CD4-positive, alpha-beta memory T cell (primary cell): ENCODE measurements at regions of chr16 and their contacts with region 1.

Region 1: DNA sequence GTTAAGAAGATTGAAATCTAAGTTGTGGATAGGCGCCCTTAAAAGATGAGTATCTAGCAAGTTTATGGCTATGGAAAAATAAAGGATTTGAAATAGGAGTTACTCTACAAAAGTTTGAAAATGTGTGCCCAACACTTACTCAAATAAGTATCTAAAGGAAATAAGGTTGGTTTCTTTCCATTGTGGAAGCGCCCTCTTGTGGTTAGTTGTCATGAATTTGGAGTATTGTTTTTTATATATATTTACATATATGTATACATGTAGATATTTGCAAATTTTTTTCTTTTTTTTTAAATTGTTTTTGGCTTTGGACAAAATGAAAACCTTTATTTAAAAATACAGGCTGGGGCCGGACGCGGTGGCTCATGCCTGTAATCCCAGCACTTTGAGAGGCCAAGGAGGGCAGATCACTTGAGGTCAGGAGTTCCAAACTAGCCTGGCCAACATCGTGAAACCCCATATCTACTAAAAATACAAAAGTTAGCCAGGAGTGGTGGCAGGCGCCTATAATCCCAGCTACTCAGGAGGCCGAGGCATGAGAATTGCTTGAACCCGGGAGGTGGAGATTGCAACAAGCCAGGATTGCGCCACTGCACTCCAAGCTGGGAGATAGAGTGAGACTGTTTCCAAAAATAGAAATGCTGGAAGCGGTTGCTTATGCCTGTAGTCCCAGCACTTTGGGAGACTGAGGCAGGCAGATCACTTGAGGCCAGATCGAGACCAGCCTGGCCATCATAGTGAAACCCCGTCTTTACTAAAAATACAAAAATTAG is 24.0 kb upstream of the VPS4A start:
- DNase-seq: peak; percentile 58 to 66 (median 61)
- H3K4me3 ChIP-seq: no peak overlapping the region
- H3K4me3 Mint-ChIP-seq: no peak overlapping the region
- H3K27ac ChIP-seq: no peak overlapping the region
- H3K27ac Mint-ChIP-seq: peak overlapping the region in 2 of 7 donors; percentile 65 to 72
- H3K4me1 ChIP-seq: no peaks in the 10 kb centered on the region
- H3K4me1 Mint-ChIP-seq: peaks cover 0 to 5% (median 3%) of the 10 kb centered on the region in 4 donors
- H3K27me3 ChIP-seq: no peaks in the 10 kb centered on the region
- H3K27me3 Mint-ChIP-seq: no peaks in the 10 kb centered on the region

Region 2: GRCh38 chr16:68564367-68564985 is 722.7 kb before region 1 on chr16:
- CTCF ChIA-PET with region 1: no interaction called
- POLR2A ChIA-PET with region 1: no interaction called
- intact Hi-C with region 1: no loop called
- DNase-seq: no peak
- H3K4me3 ChIP-seq: no peak overlapping the region
- H3K4me3 Mint-ChIP-seq: peak overlapping the region in 1 of 8 donors; percentile 43
- H3K27ac ChIP-seq: no peak overlapping the region
- H3K27ac Mint-ChIP-seq: no peak overlapping the region
- H3K4me1 ChIP-seq: no peaks in the 10 kb centered on the region
- H3K4me1 Mint-ChIP-seq: no peaks in the 10 kb centered on the region
- H3K27me3 ChIP-seq: no peaks in the 10 kb centered on the region
- H3K27me3 Mint-ChIP-seq: no peaks in the 10 kb centered on the region

Region 3: GRCh38 chr16:69141014-69141413 is 146.1 kb before region 1 on chr16:
- CTCF ChIA-PET with region 1: interaction called, 297 read pairs
- POLR2A ChIA-PET with region 1: no interaction called
- intact Hi-C with region 1: no loop called
- DNase-seq: no peak
- H3K4me3 ChIP-seq: no peak overlapping the region
- H3K4me3 Mint-ChIP-seq: no peak overlapping the region
- H3K27ac ChIP-seq: no peak overlapping the region
- H3K27ac Mint-ChIP-seq: peak overlapping the region in 1 of 7 donors; percentile 1
- H3K4me1 ChIP-seq: no peaks in the 10 kb centered on the region
- H3K4me1 Mint-ChIP-seq: peaks cover 5 to 13% (median 6%) of the 10 kb centered on the region in 4 donors
- H3K27me3 ChIP-seq: no peaks in the 10 kb centered on the region
- H3K27me3 Mint-ChIP-seq: no peaks in the 10 kb centered on the region

Region 4: DNA sequence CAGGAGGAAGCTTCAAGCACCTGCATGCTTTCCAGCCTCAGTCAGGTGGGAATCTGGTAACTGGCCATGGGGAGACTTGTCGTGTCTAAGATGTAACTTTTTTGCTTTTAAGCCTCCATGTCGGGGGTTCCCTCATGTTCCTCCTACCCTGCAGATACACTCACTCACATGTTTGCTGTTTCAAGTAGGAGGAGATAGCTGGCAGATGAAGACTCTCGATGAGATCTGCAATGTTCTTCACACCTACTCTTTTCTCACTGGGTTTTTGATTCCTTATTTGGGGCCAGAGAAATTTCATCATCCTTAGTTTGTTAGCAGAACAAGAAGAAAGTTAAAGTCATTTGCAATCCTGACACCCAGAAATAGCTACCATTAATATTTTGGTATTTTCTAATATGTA is 129.9 kb before region 1 on chr16:
- CTCF ChIA-PET with region 1: interaction called, 297 read pairs
- POLR2A ChIA-PET with region 1: no interaction called
- intact Hi-C with region 1: no loop called
- DNase-seq: no peak
- H3K4me3 ChIP-seq: no peak overlapping the region
- H3K4me3 Mint-ChIP-seq: no peak overlapping the region
- H3K27ac ChIP-seq: no peak overlapping the region
- H3K27ac Mint-ChIP-seq: peak overlapping the region in 1 of 7 donors; percentile 55
- H3K4me1 ChIP-seq: no peaks in the 10 kb centered on the region
- H3K4me1 Mint-ChIP-seq: peaks cover 0 to 4% (median under 1%) of the 10 kb centered on the region in 4 donors
- H3K27me3 ChIP-seq: no peaks in the 10 kb centered on the region
- H3K27me3 Mint-ChIP-seq: no peaks in the 10 kb centered on the region

Region 5: DNA sequence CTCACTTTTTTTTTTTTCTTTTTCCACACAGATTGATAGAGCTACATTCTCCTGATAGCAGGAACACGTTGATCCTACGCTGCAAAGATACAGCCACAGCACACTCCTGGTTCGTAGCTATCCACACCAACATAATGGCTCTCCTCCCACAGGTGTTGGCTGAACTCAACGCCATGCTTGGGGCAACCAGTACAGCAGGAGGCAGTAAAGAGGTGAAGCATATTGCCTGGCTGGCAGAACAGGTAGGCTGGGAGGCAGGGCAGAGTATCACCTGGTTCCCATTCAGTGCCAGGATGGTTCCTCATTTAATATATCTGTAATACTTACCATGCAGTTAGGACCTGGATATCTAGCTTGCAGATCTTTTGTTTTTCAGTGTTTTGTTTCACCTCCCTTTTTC is 27.1 kb before region 1 on chr16:
- CTCF ChIA-PET with region 1: interaction called, 17 read pairs
- POLR2A ChIA-PET with region 1: no interaction called
- intact Hi-C with region 1: no loop called
- DNase-seq: no peak
- H3K4me3 ChIP-seq: no peak overlapping the region
- H3K4me3 Mint-ChIP-seq: no peak overlapping the region
- H3K27ac ChIP-seq: no peak overlapping the region
- H3K27ac Mint-ChIP-seq: peak overlapping the region in 2 of 7 donors; percentile 10 to 29
- H3K4me1 ChIP-seq: no peaks in the 10 kb centered on the region
- H3K4me1 Mint-ChIP-seq: peaks cover 4 to 11% (median 7%) of the 10 kb centered on the region in 4 donors
- H3K27me3 ChIP-seq: no peaks in the 10 kb centered on the region
- H3K27me3 Mint-ChIP-seq: no peaks in the 10 kb centered on the region

Region 6: DNA sequence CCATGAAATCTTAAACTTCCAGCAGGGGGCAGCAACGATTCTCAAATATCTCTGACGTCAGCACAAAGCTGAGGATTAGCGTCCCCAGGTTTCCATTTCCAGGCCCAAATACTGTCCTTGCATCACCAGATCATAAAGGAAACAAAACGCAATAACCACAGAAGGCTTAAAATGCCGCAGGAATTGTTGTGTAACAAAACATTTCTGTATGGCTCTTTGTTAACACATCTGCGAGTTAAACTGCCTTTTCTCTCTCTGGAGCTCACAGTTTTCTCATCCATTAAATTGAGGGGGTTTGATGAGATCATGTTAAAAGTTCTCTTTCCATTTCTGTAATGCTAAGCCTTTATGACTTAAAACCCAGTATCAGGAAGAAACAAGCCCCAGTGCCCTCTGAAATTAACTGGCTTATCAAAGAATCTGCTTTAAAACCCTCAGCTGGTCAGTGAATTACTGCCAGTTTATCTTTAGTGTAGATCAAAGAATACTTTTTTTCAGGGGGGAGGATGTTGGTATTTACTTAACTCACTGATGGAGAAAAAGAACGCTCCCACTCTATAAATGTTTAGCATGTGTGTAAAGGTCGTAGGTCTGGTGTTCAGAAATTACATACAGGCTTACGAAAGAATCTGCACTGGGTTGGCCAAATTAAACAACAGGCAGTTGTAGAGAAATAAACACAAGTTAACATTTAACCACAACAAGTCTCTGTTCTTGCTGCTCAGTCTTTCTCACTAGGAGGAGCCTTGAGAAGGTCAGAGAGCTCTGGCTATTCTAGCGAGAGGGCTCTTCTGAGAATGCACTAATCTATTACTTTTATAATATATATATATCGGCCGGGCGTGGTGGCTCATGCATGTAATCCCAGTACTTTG is 109.3 kb after region 1 on chr16:
- CTCF ChIA-PET with region 1: no interaction called
- POLR2A ChIA-PET with region 1: no interaction called
- intact Hi-C with region 1: no loop called
- DNase-seq: peak; percentile 65 to 76 (median 68)
- H3K4me3 ChIP-seq: no peak overlapping the region
- H3K4me3 Mint-ChIP-seq: peak overlapping the region in 1 of 8 donors; percentile 27
- H3K27ac ChIP-seq: peak overlapping the region; percentile 31
- H3K27ac Mint-ChIP-seq: peak overlapping the region in 6 of 7 donors; percentile 6 to 81 (median 24)
- H3K4me1 ChIP-seq: peaks cover 4% of the 10 kb centered on the region
- H3K4me1 Mint-ChIP-seq: peaks cover 0 to 6% (median 5%) of the 10 kb centered on the region in 4 donors
- H3K27me3 ChIP-seq: no peaks in the 10 kb centered on the region
- H3K27me3 Mint-ChIP-seq: peaks cover 0 to 3% of the 10 kb centered on the region in 2 donors